ENCODE measurements at regions of chr1 and their contacts with region 1.

Region 1: GRCh38 chr1:38608202-38608864 is 251.2 kb downstream of the RRAGC start:
- DNase-seq: peak; percentile 47
- ATAC-seq: peak; percentile 30
- H3K4me3 Mint-ChIP-seq: no peak overlapping the region
- H3K27ac Mint-ChIP-seq: no peak overlapping the region
- H3K4me1 Mint-ChIP-seq: no peaks in the 10 kb centered on the region
- H3K27me3 Mint-ChIP-seq: peaks cover 1% of the 10 kb centered on the region

Region 2: DNA sequence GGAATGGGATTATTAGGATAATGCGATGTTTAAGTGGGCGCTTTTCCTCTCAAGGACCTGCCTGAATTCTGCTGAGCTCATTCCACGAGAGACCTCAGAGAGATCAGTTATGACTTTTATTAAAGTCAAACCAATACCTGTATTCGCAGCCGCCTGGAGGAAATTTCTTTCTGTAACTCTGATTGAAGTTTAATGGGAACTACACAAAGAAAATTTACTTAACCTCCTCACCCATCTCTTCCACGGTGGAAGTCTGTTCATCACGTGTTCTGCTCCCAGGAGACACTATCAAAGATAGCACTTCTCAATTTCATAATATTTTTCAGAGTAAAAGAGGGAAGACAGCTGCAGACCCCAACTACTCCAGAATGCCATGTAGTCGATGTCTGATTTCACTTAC is 227.1 kb before region 1 on chr1:
- CTCF ChIA-PET with region 1: no interaction called
- POLR2A ChIA-PET with region 1: no interaction called
- intact Hi-C with region 1: no loop called
- DNase-seq: no peak
- ATAC-seq: no peak
- H3K4me3 Mint-ChIP-seq: no peak overlapping the region
- H3K27ac Mint-ChIP-seq: no peak overlapping the region
- H3K4me1 Mint-ChIP-seq: no peaks in the 10 kb centered on the region
- H3K27me3 Mint-ChIP-seq: peaks cover 4% of the 10 kb centered on the region

Region 3: DNA sequence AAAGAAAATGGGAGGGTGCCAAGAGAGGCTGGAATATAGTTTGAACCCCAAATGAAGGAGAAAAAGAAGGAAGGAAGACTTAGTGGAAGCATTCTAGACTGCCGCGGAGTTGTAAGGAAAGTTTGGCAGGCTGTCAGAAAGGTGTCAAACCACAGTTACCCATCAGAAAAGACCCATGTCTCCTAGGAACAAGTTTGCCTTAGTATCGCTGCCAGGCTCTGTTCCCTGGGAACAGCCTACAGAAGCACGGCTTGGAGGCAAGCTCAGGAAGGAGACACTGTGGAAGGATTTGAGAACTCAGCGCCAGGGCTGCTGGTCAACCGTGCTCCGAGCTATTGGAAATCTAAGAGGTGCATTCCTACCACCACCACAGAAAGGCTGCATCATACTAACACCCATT is 53.8 kb after region 1 on chr1:
- CTCF ChIA-PET with region 1: no interaction called
- POLR2A ChIA-PET with region 1: no interaction called
- intact Hi-C with region 1: no loop called
- DNase-seq: no peak
- ATAC-seq: no peak
- H3K4me3 Mint-ChIP-seq: no peak overlapping the region
- H3K27ac Mint-ChIP-seq: no peak overlapping the region
- H3K4me1 Mint-ChIP-seq: no peaks in the 10 kb centered on the region
- H3K27me3 Mint-ChIP-seq: peaks cover 33% of the 10 kb centered on the region

Region 4: GRCh38 chr1:38834937-38835827 is 226.8 kb after region 1 on chr1:
- CTCF ChIA-PET with region 1: no interaction called
- POLR2A ChIA-PET with region 1: no interaction called
- intact Hi-C with region 1: loop called in 1 of 2 experiments (anchors 1 kb)
- DNase-seq: peak; percentile 53
- ATAC-seq: peak; percentile 90
- H3K4me3 Mint-ChIP-seq: no peak overlapping the region
- H3K27ac Mint-ChIP-seq: no peak overlapping the region
- H3K4me1 Mint-ChIP-seq: no peaks in the 10 kb centered on the region
- H3K27me3 Mint-ChIP-seq: peaks cover 1% of the 10 kb centered on the region